Transverse colon (tissue), 4 donors: ENCODE measurements at regions of chr2 and their contacts with region 1.

Region 1: DNA sequence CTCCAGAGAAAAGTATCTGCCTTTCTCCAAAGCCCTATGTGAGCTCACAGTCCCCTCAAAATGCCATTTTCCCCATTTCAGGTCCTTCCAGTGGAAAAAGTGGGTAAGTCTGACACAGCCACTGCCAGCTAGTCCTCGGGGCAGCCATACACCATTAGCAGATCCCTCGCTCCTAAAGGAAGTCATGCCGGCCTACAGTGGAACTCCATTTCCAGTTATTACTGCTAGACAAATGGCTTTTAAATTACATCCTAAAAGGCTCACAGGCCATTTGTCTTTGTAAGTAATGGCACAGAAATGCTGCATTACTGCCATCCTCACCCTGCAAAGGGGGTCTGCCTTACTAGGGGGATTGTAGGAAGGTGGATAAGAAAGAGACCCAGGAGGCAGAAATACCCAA is 259.4 kb upstream of the SIX2 start:
- DNase-seq: no peak
- H3K4me3 ChIP-seq: no peak overlapping the region
- H3K27ac ChIP-seq: no peak overlapping the region
- H3K4me1 ChIP-seq: no peaks in the 10 kb centered on the region
- H3K27me3 ChIP-seq: peaks cover 11% of the 10 kb centered on the region
- CTCF ChIP-seq: no peak
- EP300 ChIP-seq: no peak
- POLR2A ChIP-seq: no peak

Region 2: GRCh38 chr2:44668336-44668735 is 600.3 kb before region 1 on chr2:
- in situ Hi-C with region 1: no loop called
- intact Hi-C with region 1: no loop called
- DNase-seq: no peak
- H3K4me3 ChIP-seq: no peak overlapping the region
- H3K27ac ChIP-seq: no peak overlapping the region
- H3K4me1 ChIP-seq: no peaks in the 10 kb centered on the region
- H3K27me3 ChIP-seq: no peaks in the 10 kb centered on the region
- CTCF ChIP-seq: no peak
- EP300 ChIP-seq: no peak
- POLR2A ChIP-seq: no peak

Region 3: GRCh38 chr2:45293182-45293581 is 24.6 kb after region 1 on chr2:
- in situ Hi-C with region 1: no loop called
- intact Hi-C with region 1: loop called (anchors 1 kb)
- DNase-seq: no peak
- H3K4me3 ChIP-seq: no peak overlapping the region
- H3K27ac ChIP-seq: no peak overlapping the region
- H3K4me1 ChIP-seq: no peaks in the 10 kb centered on the region
- H3K27me3 ChIP-seq: no peaks in the 10 kb centered on the region
- CTCF ChIP-seq: no peak
- EP300 ChIP-seq: no peak
- POLR2A ChIP-seq: no peak